Activated B cell treated with CpG ODN at 0.5 μM for 24 hours (primary cell): ENCODE measurements at regions of chr4 and their contacts with region 1.

Region 1: GRCh38 chr4:140057701-140058100 is 96.3 kb downstream of the MAML3 start:
- DNase-seq: no peak
- ATAC-seq: peak; percentile 50
- H3K4me3 Mint-ChIP-seq: peak overlapping the region; percentile 0
- H3K27ac Mint-ChIP-seq: peak overlapping the region; percentile 82
- H3K4me1 Mint-ChIP-seq: peaks cover 45% of the 10 kb centered on the region
- H3K27me3 Mint-ChIP-seq: peaks cover 19% of the 10 kb centered on the region
- CTCF ChIP-seq: no peak

Region 2: DNA sequence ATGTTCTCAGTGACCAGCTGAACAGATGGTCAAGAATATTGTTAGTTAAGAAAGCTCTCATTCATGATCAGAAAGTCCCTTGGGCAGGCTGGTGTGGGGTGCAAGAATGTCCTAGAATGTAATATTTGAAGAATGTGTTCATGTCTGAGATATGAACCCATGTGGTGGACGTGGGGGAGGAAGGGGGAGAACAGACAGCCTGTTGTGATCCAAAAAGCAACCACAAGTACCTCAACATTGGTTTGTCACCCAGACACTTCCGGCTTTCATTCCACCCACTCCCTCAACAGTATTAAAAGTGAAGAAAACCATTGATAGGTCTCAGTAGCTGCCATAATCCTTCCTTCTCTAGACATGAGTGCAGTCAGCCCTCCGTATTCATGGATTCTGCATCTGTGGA is 14.1 kb after region 1 on chr4:
- CTCF ChIA-PET with region 1: no interaction called
- POLR2A ChIA-PET with region 1: interaction called, 6 read pairs
- intact Hi-C with region 1: loop called (anchors 2 kb)
- DNase-seq: no peak
- ATAC-seq: peak; percentile 66
- H3K4me3 Mint-ChIP-seq: no peak overlapping the region
- H3K27ac Mint-ChIP-seq: peak overlapping the region; percentile 57
- H3K4me1 Mint-ChIP-seq: peaks cover 21% of the 10 kb centered on the region
- H3K27me3 Mint-ChIP-seq: peaks cover 11% of the 10 kb centered on the region
- CTCF ChIP-seq: no peak